ENCODE measurements at regions of chr20 and their contacts with region 1.

Region 1: GRCh38 chr20:44609511-44610312 is 27.3 kb downstream of the PKIG start:
- DNase-seq: peak; percentile 82
- CTCF ChIP-seq: peak; percentile 95

Region 2: GRCh38 chr20:44471481-44471882 is 138.2 kb before region 1 on chr20:
- CTCF ChIA-PET with region 1: interaction called, 14 read pairs
- POLR2A ChIA-PET with region 1: no interaction called
- DNase-seq: no peak
- CTCF ChIP-seq: no peak

Region 3: DNA sequence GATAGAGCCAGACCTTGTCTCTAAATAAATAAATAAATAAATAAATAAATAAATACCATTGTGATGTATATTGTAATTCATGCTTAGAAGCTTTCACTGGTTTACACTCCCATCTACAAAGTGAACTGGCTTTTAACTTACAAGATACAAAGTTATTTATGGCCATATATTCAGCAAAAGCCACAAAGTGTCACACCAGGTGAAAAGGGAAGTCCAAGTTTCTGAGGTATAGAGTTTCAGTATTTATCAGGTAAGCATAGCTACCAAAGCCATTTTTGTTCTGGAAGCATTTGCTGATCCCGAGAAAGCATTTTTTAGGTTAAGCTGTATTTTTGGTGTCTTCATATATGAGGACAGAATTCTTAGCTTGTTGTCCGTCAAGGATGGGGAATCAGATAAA is 49.5 kb before region 1 on chr20:
- CTCF ChIA-PET with region 1: interaction called, 17 read pairs
- POLR2A ChIA-PET with region 1: no interaction called
- DNase-seq: no peak
- CTCF ChIP-seq: no peak

Region 4: GRCh38 chr20:44586289-44586911 is 23.3 kb before region 1 on chr20:
- CTCF ChIA-PET with region 1: interaction called, 19 read pairs
- POLR2A ChIA-PET with region 1: interaction called, 4 read pairs
- DNase-seq: peak; percentile 57
- CTCF ChIP-seq: no peak

Region 5: GRCh38 chr20:44629542-44629941 is 19.8 kb after region 1 on chr20:
- CTCF ChIA-PET with region 1: interaction called, 14 read pairs
- POLR2A ChIA-PET with region 1: no interaction called
- DNase-seq: no peak
- CTCF ChIP-seq: no peak

Region 6: GRCh38 chr20:44837946-44838345 is 228.2 kb after region 1 on chr20:
- CTCF ChIA-PET with region 1: no interaction called
- POLR2A ChIA-PET with region 1: no interaction called
- DNase-seq: no peak
- CTCF ChIP-seq: no peak